Sciatic nerve (tissue), 2 donors: ENCODE measurements at regions of chrX and their contacts with region 1.

Region 1: DNA sequence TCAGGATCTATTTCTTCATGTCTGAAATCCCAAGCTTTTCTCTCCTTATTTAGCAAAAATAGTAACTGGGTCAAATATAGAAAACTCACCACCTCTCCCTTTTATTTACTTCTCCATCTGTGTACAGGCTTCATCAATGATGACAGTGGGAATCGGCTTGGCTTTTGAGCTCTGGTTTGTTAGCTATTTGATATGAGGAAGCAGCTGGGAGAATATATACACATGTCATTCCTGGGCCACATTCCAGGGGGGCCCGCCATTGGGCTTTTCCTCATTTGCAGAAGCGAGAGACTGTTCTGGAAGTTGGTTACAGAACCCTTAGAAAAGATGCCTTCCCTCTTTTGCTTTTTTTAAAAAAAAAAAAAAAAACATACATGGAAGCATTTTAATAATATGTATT is 107.4 kb upstream of the F9 start:
- DNase-seq: no peak
- ATAC-seq: no peak

Region 2: DNA sequence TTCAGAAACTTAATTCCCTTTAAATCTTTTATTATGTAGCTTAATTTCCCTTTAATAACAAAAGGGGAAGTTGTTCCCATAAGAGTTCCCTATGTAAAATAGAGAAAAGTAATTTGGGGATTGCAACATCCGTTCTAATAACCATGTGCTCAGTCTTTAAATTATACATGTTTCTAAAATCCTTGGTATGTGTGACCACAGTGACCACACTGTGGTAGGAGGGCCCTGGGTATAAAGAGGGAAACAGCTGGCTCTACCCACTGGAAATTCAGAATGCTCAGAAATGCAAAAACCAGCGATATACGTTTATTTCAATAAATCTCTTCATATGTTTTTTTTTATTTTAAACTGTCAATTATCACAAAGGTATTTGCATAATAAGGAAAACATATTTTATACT is 930.8 kb before region 1 on chrX:
- intact Hi-C with region 1: no loop called
- DNase-seq: no peak
- ATAC-seq: no peak

Region 3: GRCh38 chrX:140318296-140318695 is 895.1 kb after region 1 on chrX:
- intact Hi-C with region 1: loop called (anchors 10 kb)
- DNase-seq: no peak
- ATAC-seq: no peak